ENCODE measurements at regions of chr1 and their contacts with region 1.

Region 1: DNA sequence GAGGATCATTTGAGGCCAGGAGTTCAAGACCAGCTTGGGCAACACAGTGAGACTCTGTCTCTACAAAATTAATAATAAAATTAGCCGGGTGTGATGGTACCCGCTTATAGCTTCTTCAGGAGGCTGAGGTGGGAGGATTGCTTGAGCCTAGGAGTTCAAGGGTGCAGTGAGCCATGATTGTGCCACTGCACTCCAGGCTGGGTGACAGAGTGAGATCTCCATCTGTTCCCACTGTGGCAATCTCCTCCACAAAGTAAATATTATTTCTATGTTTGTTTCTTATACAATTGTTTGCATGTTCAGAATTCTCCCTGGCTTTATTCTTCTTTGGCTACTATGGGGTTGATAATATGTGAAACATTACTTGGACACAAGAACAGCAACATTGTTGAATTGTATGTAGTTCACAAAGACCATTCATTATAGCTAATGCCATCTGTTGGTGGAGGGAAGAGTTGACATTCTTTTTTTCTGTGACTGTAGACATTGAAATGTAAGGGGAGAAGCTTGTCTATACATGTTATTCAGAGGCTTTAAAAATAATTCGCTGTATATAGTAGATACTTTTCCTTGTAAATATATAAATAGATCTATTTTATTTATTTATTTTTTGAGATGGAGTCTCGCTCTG is 47.8 kb upstream of the SRSF10 start:
- DNase-seq: no peak
- H3K4me3 ChIP-seq: no peak overlapping the region
- H3K27me3 ChIP-seq: no peaks in the 10 kb centered on the region
- CTCF ChIP-seq: peak; percentile 61

Region 2: DNA sequence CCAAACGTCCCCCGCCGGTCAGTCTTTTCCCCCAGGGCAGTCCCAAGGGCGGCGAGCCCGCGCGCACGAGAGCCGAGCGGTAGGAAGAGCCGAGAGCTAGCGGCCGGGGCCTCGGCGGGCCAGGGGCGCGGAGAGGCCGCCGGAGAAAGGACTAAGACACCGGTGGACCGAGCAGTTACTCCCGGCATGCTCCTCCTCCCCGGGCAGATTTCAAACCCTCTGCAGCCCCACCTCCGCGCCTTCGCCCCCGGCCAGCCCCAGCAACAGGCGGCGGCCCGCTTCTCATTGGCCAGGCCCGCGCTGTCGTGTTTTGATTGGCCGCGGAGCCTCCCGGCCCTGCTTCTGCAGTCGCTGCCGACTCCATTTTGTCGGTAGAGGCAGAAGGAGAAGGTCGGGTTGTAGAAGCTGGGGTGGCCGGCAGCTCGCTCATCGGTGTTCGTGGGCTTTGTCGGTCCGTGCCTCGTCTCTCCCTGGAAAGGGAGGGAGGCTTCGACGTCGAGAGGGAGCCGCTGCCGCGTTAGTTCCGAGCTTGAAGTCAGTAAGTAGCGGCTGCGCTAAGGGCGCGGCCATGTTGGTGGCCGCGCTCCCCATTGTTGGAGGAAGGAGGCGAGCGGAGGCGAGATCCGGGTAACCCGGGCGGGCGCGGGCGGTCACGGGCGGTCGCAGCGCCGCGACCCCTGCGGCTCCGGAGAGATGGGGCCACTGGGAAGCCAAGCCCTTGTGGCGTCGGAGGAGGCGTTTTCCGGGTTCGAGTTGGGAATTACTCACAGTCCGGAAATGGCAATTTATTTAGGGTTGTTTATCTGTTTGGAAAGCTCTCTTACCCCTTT is 68.3 kb before region 1 on chr1 and contains the start of gene PNRC2:
- CTCF ChIA-PET with region 1: interaction called, 13 read pairs
- POLR2A ChIA-PET with region 1: no interaction called
- DNase-seq: peak; percentile 82
- H3K4me3 ChIP-seq: peak within 1 kb of the TSS; percentile 85
- H3K27me3 ChIP-seq: no peaks in the 10 kb centered on the region
- CTCF ChIP-seq: no peak
- polyA plus RNA-seq, gene PNRC2: 30.0 and 51.1 TPM in 2 replicates

Region 3: GRCh38 chr1:23964790-23965740 is 62.9 kb before region 1 on chr1:
- CTCF ChIA-PET with region 1: interaction called, 13 read pairs
- POLR2A ChIA-PET with region 1: no interaction called
- DNase-seq: no peak
- H3K4me3 ChIP-seq: no peak overlapping the region
- H3K27me3 ChIP-seq: no peaks in the 10 kb centered on the region
- CTCF ChIP-seq: no peak

Region 4: GRCh38 chr1:24003331-24003972 is 24.5 kb before region 1 on chr1:
- CTCF ChIA-PET with region 1: no interaction called
- POLR2A ChIA-PET with region 1: no interaction called
- DNase-seq: no peak
- H3K4me3 ChIP-seq: no peak overlapping the region
- H3K27me3 ChIP-seq: no peaks in the 10 kb centered on the region; the same call in 1 of the 2 replicates
- CTCF ChIP-seq: no peak

Measured in BJ (cell line).